ENCODE measurements at regions of chr15 and their contacts with region 1.

Region 1: GRCh38 chr15:38683382-38684242 is 119.0 kb upstream of the RASGRP1 start:
- DNase-seq: no peak
- ATAC-seq: peak; percentile 93
- H3K4me3 ChIP-seq: no peak overlapping the region
- H3K27ac ChIP-seq: no peak overlapping the region
- H3K4me1 ChIP-seq: no peaks in the 10 kb centered on the region
- H3K27me3 ChIP-seq: peaks cover 5% of the 10 kb centered on the region; the same call in 1 of the 2 replicates
- CTCF ChIP-seq: peak; percentile 84

Region 2: GRCh38 chr15:37995461-37996347 is 687.9 kb before region 1 on chr15:
- CTCF ChIA-PET with region 1: interaction called, 3 read pairs
- POLR2A ChIA-PET with region 1: no interaction called
- in situ Hi-C with region 1: no loop called
- intact Hi-C with region 1: loop called (anchors 5 kb)
- DNase-seq: no peak
- ATAC-seq: peak; percentile 78
- H3K4me3 ChIP-seq: no peak overlapping the region
- H3K27ac ChIP-seq: no peak overlapping the region
- H3K4me1 ChIP-seq: no peaks in the 10 kb centered on the region
- H3K27me3 ChIP-seq: no peaks in the 10 kb centered on the region
- CTCF ChIP-seq: peak; percentile 69

Region 3: GRCh38 chr15:38440353-38441129 is 243.1 kb before region 1 on chr15:
- CTCF ChIA-PET with region 1: interaction called, 7 read pairs
- POLR2A ChIA-PET with region 1: no interaction called
- in situ Hi-C with region 1: no loop called
- intact Hi-C with region 1: loop called (anchors 1 kb)
- DNase-seq: peak; percentile 38
- ATAC-seq: peak; percentile 90
- H3K4me3 ChIP-seq: no peak overlapping the region
- H3K27ac ChIP-seq: no peak overlapping the region
- H3K4me1 ChIP-seq: no peaks in the 10 kb centered on the region
- H3K27me3 ChIP-seq: no peaks in the 10 kb centered on the region; the same call in 1 of the 2 replicates
- CTCF ChIP-seq: peak; percentile 95

Region 4: DNA sequence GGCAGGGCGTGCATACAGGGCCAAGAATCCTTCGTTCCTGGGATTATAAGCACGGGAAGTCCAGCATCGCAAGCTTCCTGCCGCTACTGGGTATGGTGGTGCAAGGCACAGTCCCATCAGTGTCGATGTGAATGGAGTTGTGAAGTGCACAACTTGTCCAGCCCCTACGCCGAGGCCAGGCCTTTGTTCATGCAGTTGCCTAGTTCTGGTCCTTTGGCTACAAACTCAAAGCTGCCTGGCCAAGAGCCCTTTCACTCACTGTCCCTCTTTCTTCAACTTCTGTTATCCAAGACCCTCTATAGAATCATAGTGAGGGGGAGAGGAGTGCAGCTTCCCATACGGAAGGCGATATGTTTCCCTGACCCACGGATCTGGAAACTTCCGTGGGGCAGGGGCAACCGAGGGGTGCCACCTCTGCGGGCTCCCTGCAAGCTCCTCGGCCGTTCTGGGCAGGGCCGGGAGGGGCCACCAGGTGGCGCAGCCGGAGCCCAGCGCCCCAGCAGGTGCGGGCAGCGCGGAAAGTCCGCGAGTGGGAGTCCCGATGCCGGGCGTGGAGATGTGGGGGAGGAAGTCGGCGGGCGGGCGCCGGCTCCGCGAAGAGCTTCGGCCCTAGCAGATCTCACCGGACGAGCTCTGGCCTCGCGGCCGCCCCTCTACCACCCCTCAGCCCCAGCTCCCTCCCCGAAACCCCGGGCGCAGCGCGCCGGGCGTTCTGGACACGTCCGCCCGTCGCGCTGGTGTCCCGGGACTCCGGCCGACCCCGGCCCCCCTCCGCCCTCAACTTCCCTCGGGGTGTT is 119.7 kb before region 1 on chr15:
- CTCF ChIA-PET with region 1: interaction called, 4 read pairs
- POLR2A ChIA-PET with region 1: no interaction called
- in situ Hi-C with region 1: no loop called
- intact Hi-C with region 1: loop called (anchors 2 kb)
- DNase-seq: peak; percentile 13
- ATAC-seq: peak; percentile 95
- H3K4me3 ChIP-seq: peak overlapping the region; percentile 42 to 49
- H3K27ac ChIP-seq: no peak overlapping the region
- H3K4me1 ChIP-seq: no peaks in the 10 kb centered on the region
- H3K27me3 ChIP-seq: peaks cover 17% of the 10 kb centered on the region
- CTCF ChIP-seq: peak; percentile 96

Region 5: GRCh38 chr15:38961931-38962330 is 278.3 kb after region 1 on chr15:
- CTCF ChIA-PET with region 1: no interaction called
- POLR2A ChIA-PET with region 1: no interaction called
- in situ Hi-C with region 1: no loop called
- intact Hi-C with region 1: no loop called
- DNase-seq: no peak
- ATAC-seq: no peak
- H3K4me3 ChIP-seq: no peak overlapping the region
- H3K27ac ChIP-seq: no peak overlapping the region
- H3K4me1 ChIP-seq: no peaks in the 10 kb centered on the region
- H3K27me3 ChIP-seq: no peaks in the 10 kb centered on the region
- CTCF ChIP-seq: no peak